ENCODE measurements at regions of chr5 and their contacts with region 1.

Region 1: DNA sequence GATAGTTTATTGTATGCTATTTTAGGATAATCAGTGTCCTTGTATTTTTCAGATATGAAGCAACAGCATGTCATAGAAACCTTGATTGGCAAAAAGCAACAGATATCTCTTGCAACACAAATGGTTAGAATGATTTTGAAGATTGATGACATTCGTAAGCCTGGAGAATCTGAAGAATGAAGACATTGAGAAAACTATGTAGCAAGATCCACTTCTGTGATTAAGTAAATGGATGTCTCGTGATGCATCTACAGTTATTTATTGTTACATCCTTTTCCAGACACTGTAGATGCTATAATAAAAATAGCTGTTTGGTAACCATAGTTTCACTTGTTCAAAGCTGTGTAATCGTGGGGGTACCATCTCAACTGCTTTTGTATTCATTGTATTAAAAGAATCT is 14.5 kb downstream of the CCT5 start:
- DNase-seq: no peak
- H3K4me3 Mint-ChIP-seq: no peak overlapping the region
- H3K27ac Mint-ChIP-seq: peak overlapping the region; percentile 47
- H3K4me1 Mint-ChIP-seq: peaks cover 6% of the 10 kb centered on the region
- H3K27me3 Mint-ChIP-seq: no peaks in the 10 kb centered on the region

Region 2: GRCh38 chr5:10073441-10074104 is 191.0 kb before region 1 on chr5:
- CTCF ChIA-PET with region 1: no interaction called
- POLR2A ChIA-PET with region 1: no interaction called
- DNase-seq: no peak
- H3K4me3 Mint-ChIP-seq: no peak overlapping the region
- H3K27ac Mint-ChIP-seq: no peak overlapping the region
- H3K4me1 Mint-ChIP-seq: no peaks in the 10 kb centered on the region
- H3K27me3 Mint-ChIP-seq: no peaks in the 10 kb centered on the region

Region 3: DNA sequence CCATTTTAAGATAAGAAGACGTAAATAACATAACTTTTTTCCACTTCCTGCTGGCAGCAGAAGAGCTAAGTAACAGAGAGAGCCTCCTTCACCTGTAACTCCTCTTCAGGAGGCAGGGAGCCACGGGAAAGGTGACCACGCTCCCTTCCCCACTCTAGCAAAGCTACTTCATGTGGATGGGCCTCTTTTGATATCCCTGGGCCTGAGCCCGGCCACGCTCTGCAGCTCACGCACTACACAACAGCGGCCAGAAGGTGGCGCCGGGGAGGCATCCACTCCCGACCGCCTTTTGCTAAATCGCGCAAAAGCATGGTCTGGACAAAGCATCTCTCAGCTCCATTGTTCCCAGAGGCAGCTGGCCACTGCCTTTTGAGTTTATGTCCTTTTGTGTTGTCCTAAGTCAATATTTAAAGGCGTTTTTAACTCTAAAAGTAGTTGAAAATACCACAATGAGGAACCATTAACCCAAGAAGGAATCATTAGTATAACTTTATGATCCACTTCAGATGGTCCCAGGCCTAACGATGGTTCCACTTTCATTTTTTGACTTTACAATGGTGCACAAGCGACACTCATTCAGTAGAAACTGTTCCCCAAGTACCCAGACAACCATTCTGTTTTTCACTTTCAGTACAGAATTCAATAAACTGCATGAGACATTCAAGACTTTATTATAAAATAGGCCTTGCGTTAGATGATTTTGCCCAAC is 19.5 kb after region 1 on chr5:
- CTCF ChIA-PET with region 1: interaction called, 19 read pairs
- POLR2A ChIA-PET with region 1: no interaction called
- DNase-seq: peak; percentile 77
- H3K4me3 Mint-ChIP-seq: no peak overlapping the region
- H3K27ac Mint-ChIP-seq: no peak overlapping the region
- H3K4me1 Mint-ChIP-seq: peaks cover 13% of the 10 kb centered on the region
- H3K27me3 Mint-ChIP-seq: no peaks in the 10 kb centered on the region